ENCODE measurements at regions of chr1 and their contacts with region 1.

Region 1: GRCh38 chr1:240691521-240692338 is 79.8 kb upstream of the GREM2 start:
- H3K4me3 ChIP-seq: no peak overlapping the region
- H3K27ac ChIP-seq: no peak overlapping the region
- H3K4me1 ChIP-seq: no peaks in the 10 kb centered on the region
- CTCF ChIP-seq: peak; percentile 97

Region 2: GRCh38 chr1:240608707-240609106 is 83.0 kb before region 1 on chr1:
- CTCF ChIA-PET with region 1: interaction called, 29 read pairs
- POLR2A ChIA-PET with region 1: no interaction called
- H3K4me3 ChIP-seq: no peak overlapping the region
- H3K27ac ChIP-seq: no peak overlapping the region
- H3K4me1 ChIP-seq: peaks cover 21% of the 10 kb centered on the region
- CTCF ChIP-seq: peak; percentile 47

Measured in HEK293 (cell line).